ENCODE measurements at regions of chr1 and their contacts with region 1.

Region 1: DNA sequence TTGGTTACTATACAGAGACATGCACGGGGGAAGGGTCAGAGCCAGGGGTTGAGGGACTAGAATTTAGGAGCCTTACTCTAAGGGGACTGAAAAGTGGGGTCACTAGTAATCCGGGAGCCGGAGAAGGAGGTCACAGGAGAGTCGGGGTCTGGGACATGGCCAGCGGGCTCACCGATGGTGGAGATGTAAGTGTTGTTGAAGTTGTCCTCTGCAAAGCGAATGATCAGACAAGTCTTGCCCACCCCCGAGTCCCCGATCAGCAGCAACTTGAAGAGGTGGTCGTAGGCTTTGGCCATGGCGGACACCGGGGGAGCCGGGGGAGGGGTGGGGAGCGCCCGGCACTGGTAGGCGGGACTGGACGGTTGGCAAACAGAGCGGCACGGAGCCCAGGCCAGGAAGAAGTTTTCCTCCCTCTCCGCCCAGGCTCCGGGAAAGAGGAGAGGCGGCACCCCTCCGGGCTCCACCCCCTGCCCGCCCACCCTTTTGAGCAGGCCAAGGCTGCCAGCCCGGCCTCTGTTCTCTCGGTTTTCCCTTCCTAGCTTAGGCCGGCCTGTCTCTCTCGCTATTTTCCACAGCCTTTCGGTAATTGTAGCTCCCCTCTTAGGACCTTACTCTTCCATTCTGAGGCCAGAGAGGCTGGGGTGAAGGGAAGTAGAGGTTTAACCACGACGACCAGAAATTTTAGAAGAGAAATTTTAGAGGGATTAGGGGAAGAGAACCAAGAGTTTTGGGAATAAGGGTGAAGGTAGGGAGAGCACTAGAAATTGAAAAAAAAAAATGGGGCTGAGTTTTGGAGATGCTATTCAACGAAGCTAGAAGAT is at the start of gene RAB13:
- DNase-seq: peak; percentile 93
- ATAC-seq: peak; percentile 90
- H3K4me3 ChIP-seq: peak within 1 kb of the TSS; percentile 74
- H3K27ac ChIP-seq: peak within 1 kb of the TSS; percentile 76
- H3K4me1 ChIP-seq: peaks cover 14% of the 10 kb centered on the region
- H3K27me3 ChIP-seq: no peaks in the 10 kb centered on the region
- CTCF ChIP-seq: no peak
- total RNA-seq, gene RAB13: 103 TPM

Region 2: GRCh38 chr1:153796791-153797659 is 189.1 kb before region 1 on chr1:
- intact Hi-C with region 1: loop called (anchors 5 kb)
- DNase-seq: peak; percentile 76
- ATAC-seq: peak; percentile 82
- H3K4me3 ChIP-seq: no peak overlapping the region
- H3K27ac ChIP-seq: no peak overlapping the region
- H3K4me1 ChIP-seq: no peaks in the 10 kb centered on the region
- H3K27me3 ChIP-seq: no peaks in the 10 kb centered on the region
- CTCF ChIP-seq: peak; percentile 92

Measured in upper lobe of right lung (tissue), 1 donor.